Activated naive CD4-positive, alpha-beta T cell treated with anti-CD3 and anti-CD28 coated beads for 36 hours (primary cell): ENCODE measurements at regions of chr3 and their contacts with region 1.

Region 1: DNA sequence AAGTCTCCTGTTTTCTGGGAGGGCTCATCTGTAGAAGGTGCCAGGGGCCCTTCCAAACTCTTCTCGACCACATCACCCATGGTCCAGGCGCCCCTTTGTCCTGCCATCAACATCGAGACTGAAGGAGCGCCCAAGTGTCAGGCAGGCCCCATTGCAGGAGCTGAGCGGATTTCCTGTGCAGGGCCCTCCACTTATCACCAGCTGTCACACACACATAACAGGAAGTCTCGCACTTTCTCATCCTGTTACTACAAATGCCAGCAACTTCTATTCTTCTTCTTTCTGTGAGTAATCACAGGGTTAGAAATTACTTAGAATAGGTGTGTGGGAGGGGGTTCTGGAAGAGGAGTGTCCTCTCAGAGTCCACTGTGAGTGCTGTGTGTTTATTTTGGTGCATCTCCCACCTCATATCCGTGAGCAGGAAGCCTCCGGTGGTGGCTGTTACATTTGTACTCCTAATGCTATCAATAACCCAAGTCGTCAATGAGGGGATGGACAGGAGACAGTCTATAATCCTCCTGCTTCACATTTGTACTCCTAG is at the start of gene KLHL6:
- DNase-seq: peak; percentile 91
- H3K4me3 Mint-ChIP-seq: peak within 1 kb of the TSS; percentile 99
- H3K27ac Mint-ChIP-seq: peak within 1 kb of the TSS; percentile 100
- H3K4me1 Mint-ChIP-seq: peaks cover 40% of the 10 kb centered on the region
- H3K27me3 Mint-ChIP-seq: no peaks in the 10 kb centered on the region
- total RNA-seq, gene KLHL6: 82.3 to 82.4 TPM

Region 2: DNA sequence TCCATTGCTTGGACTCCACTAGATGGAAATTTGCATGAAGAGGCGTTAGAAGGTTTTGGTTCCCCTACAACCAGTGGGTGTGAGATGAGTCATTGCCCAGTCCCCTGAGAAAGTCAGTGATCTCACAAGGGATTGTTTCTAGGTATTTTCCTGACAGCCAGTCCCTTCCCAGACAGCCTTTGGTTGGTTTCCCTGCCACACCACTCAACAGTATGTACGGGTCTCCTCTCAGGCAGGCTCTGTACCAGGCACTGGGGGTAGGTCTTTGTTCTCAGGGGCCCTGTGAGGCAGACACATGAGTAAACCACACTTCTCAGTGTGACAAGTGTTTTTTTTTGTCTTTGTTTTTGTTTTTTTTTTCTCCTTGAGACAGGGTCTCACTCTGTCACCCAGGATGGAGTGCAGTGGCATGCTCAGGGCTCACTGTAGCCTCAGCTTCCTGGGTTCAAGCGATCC is 397.0 kb before region 1 on chr3:
- CTCF ChIA-PET with region 1: no interaction called
- intact Hi-C with region 1: loop called (anchors 1 kb)
- DNase-seq: peak; percentile 80
- H3K4me3 Mint-ChIP-seq: peak overlapping the region; percentile 19
- H3K27ac Mint-ChIP-seq: peak overlapping the region; percentile 74
- H3K4me1 Mint-ChIP-seq: peaks cover 41% of the 10 kb centered on the region
- H3K27me3 Mint-ChIP-seq: no peaks in the 10 kb centered on the region

Region 3: DNA sequence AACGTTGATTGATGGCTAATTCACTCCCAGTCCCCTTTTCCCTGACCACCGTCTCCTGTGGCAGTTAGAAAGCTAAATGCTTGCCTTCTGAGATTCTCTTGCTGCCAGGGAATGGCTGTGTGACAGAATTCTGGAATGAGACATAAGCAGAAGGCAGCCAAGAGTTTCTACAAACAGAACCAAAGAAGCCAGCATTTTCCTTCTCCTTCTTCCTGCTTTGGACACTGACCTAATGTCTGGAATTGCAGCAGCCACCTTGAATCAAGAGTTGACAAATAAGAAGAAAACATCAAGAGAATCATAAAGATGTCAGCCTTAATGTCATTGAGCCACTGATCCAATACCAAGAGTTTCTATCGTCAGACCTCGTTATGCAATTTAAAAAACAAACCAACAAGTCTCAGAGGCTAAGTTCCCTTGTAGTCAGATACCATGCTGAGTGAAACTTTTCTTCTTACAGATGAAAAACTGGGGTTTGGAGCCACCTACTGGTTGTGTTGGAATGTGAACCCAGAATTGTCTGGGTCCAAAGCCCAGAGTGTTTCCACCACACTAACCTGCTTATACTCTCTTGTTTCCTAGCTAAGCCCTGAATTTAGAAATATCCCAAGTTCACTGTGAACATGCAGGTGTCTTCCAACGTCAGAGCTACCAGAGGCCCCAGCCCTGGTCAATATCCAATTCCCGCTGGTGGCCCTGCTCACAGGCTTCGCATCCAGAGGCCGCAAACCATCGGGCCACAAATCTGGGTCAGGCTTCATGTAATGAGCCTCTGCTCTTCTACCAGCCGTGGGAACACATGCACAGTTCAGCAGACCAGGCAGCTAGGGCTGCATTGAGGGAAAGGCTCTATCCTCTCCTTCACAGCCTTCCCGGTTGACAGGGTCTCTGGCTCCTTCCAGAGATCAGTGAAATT is 169.7 kb before region 1 on chr3:
- CTCF ChIA-PET with region 1: no interaction called
- intact Hi-C with region 1: loop called (anchors 5 kb)
- DNase-seq: peak; percentile 79
- H3K4me3 Mint-ChIP-seq: no peak overlapping the region
- H3K27ac Mint-ChIP-seq: no peak overlapping the region
- H3K4me1 Mint-ChIP-seq: peaks cover 9% of the 10 kb centered on the region
- H3K27me3 Mint-ChIP-seq: no peaks in the 10 kb centered on the region

Region 4: DNA sequence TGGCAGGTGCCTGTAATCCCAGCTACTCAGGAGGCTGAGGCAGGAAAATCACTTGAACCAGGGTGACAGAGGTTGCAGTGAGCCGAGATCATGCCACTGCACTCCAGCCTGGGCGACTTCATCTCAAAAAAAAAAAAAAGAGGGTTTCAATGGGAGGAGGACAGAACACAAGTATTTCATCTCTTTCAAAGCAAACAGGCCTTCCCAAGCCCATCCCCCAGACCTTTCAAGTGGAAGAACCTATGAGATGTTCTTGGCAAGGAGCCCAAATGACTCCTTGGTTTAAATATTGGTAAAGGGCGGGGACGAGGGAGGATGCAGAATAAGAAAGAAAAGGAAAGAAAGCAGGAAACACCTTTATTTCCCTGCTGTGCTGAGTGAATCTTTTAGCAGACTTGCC is 64.9 kb before region 1 on chr3:
- CTCF ChIA-PET with region 1: interaction called, 7 read pairs
- intact Hi-C with region 1: loop called (anchors 1 kb)
- DNase-seq: peak; percentile 62
- H3K4me3 Mint-ChIP-seq: no peak overlapping the region
- H3K27ac Mint-ChIP-seq: peak overlapping the region; percentile 69
- H3K4me1 Mint-ChIP-seq: peaks cover 14% of the 10 kb centered on the region
- H3K27me3 Mint-ChIP-seq: no peaks in the 10 kb centered on the region

Region 5: DNA sequence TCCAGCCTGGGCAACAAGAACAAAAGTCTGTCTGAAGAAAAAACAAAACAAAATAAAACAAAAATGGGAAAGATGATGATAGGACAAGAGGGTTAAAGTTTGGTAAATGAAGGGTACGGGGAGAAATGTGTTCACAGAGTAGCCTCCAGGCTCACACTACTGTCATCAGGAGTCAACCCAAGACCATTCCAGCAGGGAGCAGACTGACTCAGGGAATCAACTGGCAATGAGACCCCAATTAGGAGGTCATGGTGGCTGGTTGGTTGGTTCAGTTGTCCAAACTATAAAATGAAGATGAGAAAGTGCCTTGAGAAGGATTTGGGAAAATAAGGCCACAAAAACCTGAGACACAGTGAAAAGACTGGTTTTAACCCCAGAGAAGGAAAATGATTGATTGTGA is 51.9 kb before region 1 on chr3:
- CTCF ChIA-PET with region 1: no interaction called
- intact Hi-C with region 1: no loop called
- DNase-seq: no peak
- H3K4me3 Mint-ChIP-seq: no peak overlapping the region
- H3K27ac Mint-ChIP-seq: no peak overlapping the region
- H3K4me1 Mint-ChIP-seq: peaks cover 22% of the 10 kb centered on the region
- H3K27me3 Mint-ChIP-seq: no peaks in the 10 kb centered on the region

Region 6: GRCh38 chr3:183635431-183636220 is 80.0 kb after region 1 on chr3 and contains the start of gene KLHL24:
- CTCF ChIA-PET with region 1: interaction called, 3 read pairs
- intact Hi-C with region 1: loop called (anchors 1 kb)
- DNase-seq: peak; percentile 95
- H3K4me3 Mint-ChIP-seq: peak within 1 kb of the TSS; percentile 91
- H3K27ac Mint-ChIP-seq: peak within 1 kb of the TSS; percentile 93
- H3K4me1 Mint-ChIP-seq: peaks cover 40% of the 10 kb centered on the region
- H3K27me3 Mint-ChIP-seq: no peaks in the 10 kb centered on the region
- total RNA-seq, gene KLHL24: 26.2 to 26.9 TPM

Region 7: GRCh38 chr3:184298759-184299496 is 743.3 kb after region 1 on chr3 and contains the start of gene PSMD2:
- CTCF ChIA-PET with region 1: no interaction called
- intact Hi-C with region 1: loop called (anchors 1 kb)
- DNase-seq: peak; percentile 99
- H3K4me3 Mint-ChIP-seq: peak within 1 kb of the TSS; percentile 98
- H3K27ac Mint-ChIP-seq: peak within 1 kb of the TSS; percentile 87
- H3K4me1 Mint-ChIP-seq: peaks cover 21% of the 10 kb centered on the region
- H3K27me3 Mint-ChIP-seq: no peaks in the 10 kb centered on the region
- total RNA-seq, gene PSMD2: 244 to 257 TPM